GM23248 (cell line): ENCODE measurements at regions of chr15 and their contacts with region 1.

Region 1: GRCh38 chr15:100349696-100350433 is 8.1 kb upstream of the ADAMTS17 start:
- DNase-seq: peak; percentile 93
- H3K4me3 ChIP-seq: peak overlapping the region; percentile 95
- H3K27ac ChIP-seq: peak overlapping the region; percentile 56
- H3K4me1 ChIP-seq: peaks cover 7% of the 10 kb centered on the region; the same call in 1 of the 2 replicates
- H3K27me3 ChIP-seq: no peaks in the 10 kb centered on the region

Region 2: DNA sequence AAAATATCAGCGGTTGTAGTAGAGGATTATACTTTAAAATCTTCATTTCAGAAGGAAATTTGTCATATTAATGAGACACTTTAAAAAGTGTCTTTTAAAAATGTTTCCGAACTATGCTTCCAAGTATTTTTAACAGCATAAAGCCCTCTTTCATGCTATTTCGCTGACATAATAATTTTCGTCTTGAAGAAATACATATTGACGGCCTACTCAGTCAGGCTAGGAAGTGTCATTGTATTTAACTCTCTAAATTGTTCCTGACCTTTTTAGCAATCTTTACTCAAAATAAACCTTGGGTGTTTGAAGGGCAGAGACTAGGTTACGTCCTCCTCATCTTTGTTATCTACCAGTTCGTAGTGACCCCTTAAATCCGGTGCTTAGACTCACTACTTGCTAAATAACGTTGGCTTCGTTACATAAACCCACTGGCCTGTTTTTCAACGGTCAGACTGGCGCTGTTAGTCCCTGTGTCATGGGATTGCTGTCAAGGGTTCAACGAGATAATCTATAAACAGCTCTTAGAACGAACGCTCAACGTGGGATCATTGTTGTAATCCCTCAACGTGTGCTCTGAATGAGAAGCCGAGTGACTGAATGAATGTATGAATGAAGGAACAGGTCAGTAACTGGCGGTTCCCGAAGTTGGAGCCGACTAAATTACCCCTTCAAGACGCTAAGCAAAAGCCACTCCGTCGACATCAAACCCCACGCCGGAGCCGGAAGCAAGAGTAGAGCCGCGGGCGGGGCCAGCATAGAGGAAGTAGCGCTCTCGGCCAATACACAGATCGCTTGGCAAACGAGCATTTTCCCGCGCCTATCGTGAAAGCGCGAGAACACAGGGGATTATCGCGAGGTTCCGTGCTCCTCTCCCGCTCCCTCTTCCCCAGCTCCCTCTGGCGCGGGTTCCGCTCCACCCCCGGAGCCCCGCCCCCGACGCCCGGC is 1099.1 kb before region 1 on chr15:
- in situ Hi-C with region 1: loop called (anchors 25 kb)
- DNase-seq: peak; percentile 100
- H3K4me3 ChIP-seq: peak overlapping the region; percentile 99
- H3K27ac ChIP-seq: peak overlapping the region; percentile 86
- H3K4me1 ChIP-seq: peaks cover 36% of the 10 kb centered on the region
- H3K27me3 ChIP-seq: no peaks in the 10 kb centered on the region

Region 3: DNA sequence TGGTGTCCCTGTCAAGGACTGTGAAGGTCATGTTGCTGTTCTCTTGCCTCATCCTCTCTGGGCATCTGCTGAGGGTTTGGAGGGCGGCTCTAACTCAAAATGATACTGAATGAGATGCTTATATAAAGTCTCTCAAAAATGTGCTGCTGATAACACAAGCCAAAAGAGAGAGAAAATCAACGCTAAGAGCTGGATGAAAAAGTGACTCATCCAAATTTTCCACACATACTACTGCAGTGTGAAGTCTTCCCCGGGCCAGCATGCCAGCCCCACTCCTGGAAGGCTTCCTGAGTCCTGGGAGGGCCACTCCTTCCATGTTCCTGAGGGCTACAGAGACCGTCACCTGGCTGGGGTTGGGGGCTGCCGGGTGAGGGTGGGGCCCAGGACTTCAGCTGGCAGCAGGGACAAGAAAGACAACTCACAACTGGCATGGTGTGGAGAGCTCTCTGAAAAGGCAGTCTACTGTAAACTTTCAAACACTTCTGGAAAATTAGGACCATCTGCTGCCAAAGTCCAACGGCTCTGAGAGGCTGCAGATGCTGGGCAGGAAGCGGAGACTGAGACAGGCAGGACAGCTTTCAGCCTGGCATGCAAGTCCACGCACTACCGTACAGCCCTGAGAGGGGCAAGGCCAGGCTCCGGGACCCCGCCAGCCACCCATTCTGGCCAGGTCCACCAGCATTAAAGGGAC is 208.4 kb before region 1 on chr15:
- in situ Hi-C with region 1: no loop called
- DNase-seq: no peak
- H3K4me3 ChIP-seq: no peak overlapping the region
- H3K27ac ChIP-seq: no peak overlapping the region
- H3K4me1 ChIP-seq: no peaks in the 10 kb centered on the region
- H3K27me3 ChIP-seq: no peaks in the 10 kb centered on the region